ENCODE measurements at regions of chr1 and their contacts with region 1.

Region 1: GRCh38 chr1:156797212-156797871 is 19.3 kb downstream of the SH2D2A start:
- DNase-seq: peak in 6 of 10 donors; percentile 33 to 68 (median 44)
- H3K4me3 ChIP-seq: no peak overlapping the region
- H3K27ac ChIP-seq: peak overlapping the region; percentile 21 to 96 (median 90)
- H3K27me3 ChIP-seq: no peaks in the 10 kb centered on the region
- CTCF ChIP-seq: peak; percentile 46 to 90 (median 79)

Region 2: GRCh38 chr1:156838981-156839410 is 41.7 kb after region 1 on chr1:
- intact Hi-C with region 1: loop called in 1 of 2 experiments (anchors 5 kb)
- DNase-seq: no peak
- H3K4me3 ChIP-seq: no peak overlapping the region
- H3K27ac ChIP-seq: no peak overlapping the region
- H3K27me3 ChIP-seq: peaks cover 0 to 67% (median 24%) of the 10 kb centered on the region in 45 donors
- CTCF ChIP-seq: peak; percentile 42 to 90 (median 78)

Region 3: DNA sequence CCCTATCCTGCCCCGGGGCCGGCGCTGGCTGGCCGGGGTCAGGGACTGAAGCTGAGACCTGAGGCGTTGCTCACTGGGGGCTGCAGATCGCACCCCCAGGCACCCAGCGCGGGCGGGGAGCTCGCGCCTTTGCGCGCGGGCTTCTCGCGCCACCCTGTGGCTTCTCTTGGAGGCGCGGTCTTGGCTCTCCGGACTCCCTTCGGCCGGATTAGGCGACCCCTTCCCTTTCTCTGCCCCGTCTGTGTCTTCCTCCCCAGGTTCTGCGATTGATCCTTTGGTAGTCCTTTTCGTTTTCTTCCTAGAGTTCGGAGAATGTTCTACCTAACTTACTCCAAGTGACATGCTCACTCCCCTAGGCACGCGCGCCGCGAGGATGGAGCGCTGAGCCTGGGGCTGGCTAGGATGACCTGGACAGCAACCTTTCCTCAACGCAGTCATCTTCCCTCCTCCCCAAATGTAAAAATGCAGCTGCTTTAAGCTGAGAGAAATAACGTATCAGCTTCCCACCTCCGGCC is 62.8 kb after region 1 on chr1:
- intact Hi-C with region 1: loop called in 1 of 2 experiments (anchors 1 kb)
- DNase-seq: peak in 6 of 10 donors; percentile 18 to 72 (median 36)
- H3K4me3 ChIP-seq: peak overlapping the region; percentile 15 to 69 (median 48)
- H3K27ac ChIP-seq: peak overlapping the region in 1 of 59 donors; percentile 6
- H3K27me3 ChIP-seq: peaks cover 0 to 65% (median 39%) of the 10 kb centered on the region in 45 donors
- CTCF ChIP-seq: peak; percentile 40 to 89 (median 78)

Region 4: GRCh38 chr1:156892190-156893047 is 95.1 kb after region 1 on chr1:
- intact Hi-C with region 1: loop called in 1 of 2 experiments (anchors 5 kb)
- DNase-seq: peak; percentile 66 to 86 (median 70)
- H3K4me3 ChIP-seq: peak overlapping the region in 57 of 59 donors; percentile 1 to 63 (median 39)
- H3K27ac ChIP-seq: peak overlapping the region in 20 of 59 donors; percentile 38 to 89 (median 81)
- H3K27me3 ChIP-seq: peaks cover 0 to 36% (median 20%) of the 10 kb centered on the region in 45 donors
- CTCF ChIP-seq: peak; percentile 59 to 92 (median 82)

Region 5: GRCh38 chr1:157073944-157074767 is 276.8 kb after region 1 on chr1:
- intact Hi-C with region 1: loop called in 1 of 2 experiments (anchors 10 kb)
- DNase-seq: peak in 9 of 10 donors; percentile 26 to 75 (median 59)
- H3K4me3 ChIP-seq: peak overlapping the region in 27 of 59 donors; percentile 1 to 44 (median 24)
- H3K27ac ChIP-seq: no peak overlapping the region
- H3K27me3 ChIP-seq: peaks cover 0 to 15% (median 0%) of the 10 kb centered on the region in 45 donors
- CTCF ChIP-seq: peak in 54 of 56 donors; percentile 41 to 81 (median 62)